Esophagus squamous epithelium (tissue), 5 donors: ENCODE measurements at regions of chr5 and their contacts with region 1.

Region 1: GRCh38 chr5:141557681-141558136 is 61.1 kb downstream of the DIAPH1 start:
- DNase-seq: peak; percentile 30
- H3K4me3 ChIP-seq: peak overlapping the region in 3 of 4 donors; percentile 23 to 41 (median 28)
- H3K27ac ChIP-seq: peak overlapping the region; percentile 88 to 94 (median 91)
- H3K4me1 ChIP-seq: peaks cover 0 to 47% (median 15%) of the 10 kb centered on the region in 3 donors
- H3K27me3 ChIP-seq: no peaks in the 10 kb centered on the region
- CTCF ChIP-seq: peak; percentile 77 to 94 (median 85)
- POLR2A ChIP-seq: peak in 1 of 4 donors; percentile 19

Region 2: GRCh38 chr5:141017943-141018342 is 539.8 kb before region 1 on chr5:
- intact Hi-C with region 1: no loop called
- DNase-seq: no peak
- H3K4me3 ChIP-seq: no peak overlapping the region
- H3K27ac ChIP-seq: no peak overlapping the region
- H3K4me1 ChIP-seq: no peaks in the 10 kb centered on the region
- H3K27me3 ChIP-seq: no peaks in the 10 kb centered on the region
- CTCF ChIP-seq: no peak
- POLR2A ChIP-seq: no peak

Region 3: GRCh38 chr5:141412854-141413539 is 144.7 kb before region 1 on chr5 and contains the start of gene PCDHGA10:
- intact Hi-C with region 1: loop called (anchors 10 kb)
- DNase-seq: no peak
- H3K4me3 ChIP-seq: peak within 1 kb of the TSS; percentile 20 to 56 (median 36)
- H3K27ac ChIP-seq: peak within 1 kb of the TSS in 1 of 4 donors; percentile 30
- H3K4me1 ChIP-seq: peaks cover 0 to 4% (median 0%) of the 10 kb centered on the region in 3 donors
- H3K27me3 ChIP-seq: peaks cover 0 to 44% (median 0%) of the 10 kb centered on the region in 4 donors
- CTCF ChIP-seq: peak in 4 of 6 experiments; percentile 36 to 64 (median 57)
- POLR2A ChIP-seq: no peak
- total RNA-seq, gene PCDHGA10: 4.1 to 8.0 (median 7.3) TPM

Region 4: GRCh38 chr5:141475625-141476131 is 82.0 kb before region 1 on chr5 and contains the start of gene PCDHGC3:
- intact Hi-C with region 1: loop called (anchors 10 kb)
- DNase-seq: peak; percentile 36
- H3K4me3 ChIP-seq: peak within 1 kb of the TSS; percentile 56 to 77 (median 72)
- H3K27ac ChIP-seq: peak within 1 kb of the TSS; percentile 79 to 93 (median 92)
- H3K4me1 ChIP-seq: peaks cover 15 to 52% (median 28%) of the 10 kb centered on the region in 3 donors
- H3K27me3 ChIP-seq: no peaks in the 10 kb centered on the region
- CTCF ChIP-seq: peak; percentile 12 to 44 (median 33)
- POLR2A ChIP-seq: peak in 2 of 4 donors; percentile 55 to 66
- total RNA-seq, gene PCDHGC3: 36.6 to 52.5 (median 38.6) TPM

Region 5: GRCh38 chr5:141524604-141525597 is 32.8 kb before region 1 on chr5:
- intact Hi-C with region 1: loop called (anchors 5 kb)
- DNase-seq: no peak
- H3K4me3 ChIP-seq: peak overlapping the region in 1 of 4 donors; percentile 12
- H3K27ac ChIP-seq: peak overlapping the region; percentile 53 to 82 (median 74)
- H3K4me1 ChIP-seq: peaks cover 30 to 81% (median 53%) of the 10 kb centered on the region in 3 donors
- H3K27me3 ChIP-seq: no peaks in the 10 kb centered on the region
- CTCF ChIP-seq: peak; percentile 98 to 99 (median 99)
- POLR2A ChIP-seq: no peak